ENCODE measurements at regions of chr11 and their contacts with region 1.

Region 1: GRCh38 chr11:10735481-10736475 is 15.3 kb upstream of the CTR9 start:
- DNase-seq: peak; percentile 90 to 98
- H3K4me3 ChIP-seq: peak overlapping the region in 1 of 4 experiments; percentile 47; a peak in 4 of 8 replicates
- H3K27ac ChIP-seq: no peak overlapping the region
- H3K4me1 ChIP-seq: peaks cover 0 to 4% (median 3%) of the 10 kb centered on the region in 4 experiments; a peak in 4 of 7 replicates
- H3K27me3 ChIP-seq: no peaks in the 10 kb centered on the region; a peak in 1 of 7 replicates
- CTCF ChIP-seq: peak; percentile 85 to 95 (median 93)
- EP300 ChIP-seq: no peak; a peak in 1 of 3 replicates
- POLR2A ChIP-seq: 0 out of 3 replicates have a peak, but pooled peaks of 1 of the 2 experiments have one; percentile 23
- RAD21 ChIP-seq: peak; percentile 99

Region 2: GRCh38 chr11:10725114-10725906 is 10.5 kb before region 1 on chr11:
- CTCF ChIA-PET with region 1: interaction called, 17 read pairs
- POLR2A ChIA-PET with region 1: no interaction called
- DNase-seq: no peak
- H3K4me3 ChIP-seq: no peak overlapping the region
- H3K27ac ChIP-seq: no peak overlapping the region
- H3K4me1 ChIP-seq: peaks cover 0 to 4% (median 0%) of the 10 kb centered on the region in 4 experiments; a peak in 1 of 7 replicates
- H3K27me3 ChIP-seq: no peaks in the 10 kb centered on the region
- CTCF ChIP-seq: no peak
- EP300 ChIP-seq: no peak
- POLR2A ChIP-seq: no peak
- RAD21 ChIP-seq: no peak